A549 (cell line): ENCODE measurements at regions of chr1 and their contacts with region 1.

Region 1: DNA sequence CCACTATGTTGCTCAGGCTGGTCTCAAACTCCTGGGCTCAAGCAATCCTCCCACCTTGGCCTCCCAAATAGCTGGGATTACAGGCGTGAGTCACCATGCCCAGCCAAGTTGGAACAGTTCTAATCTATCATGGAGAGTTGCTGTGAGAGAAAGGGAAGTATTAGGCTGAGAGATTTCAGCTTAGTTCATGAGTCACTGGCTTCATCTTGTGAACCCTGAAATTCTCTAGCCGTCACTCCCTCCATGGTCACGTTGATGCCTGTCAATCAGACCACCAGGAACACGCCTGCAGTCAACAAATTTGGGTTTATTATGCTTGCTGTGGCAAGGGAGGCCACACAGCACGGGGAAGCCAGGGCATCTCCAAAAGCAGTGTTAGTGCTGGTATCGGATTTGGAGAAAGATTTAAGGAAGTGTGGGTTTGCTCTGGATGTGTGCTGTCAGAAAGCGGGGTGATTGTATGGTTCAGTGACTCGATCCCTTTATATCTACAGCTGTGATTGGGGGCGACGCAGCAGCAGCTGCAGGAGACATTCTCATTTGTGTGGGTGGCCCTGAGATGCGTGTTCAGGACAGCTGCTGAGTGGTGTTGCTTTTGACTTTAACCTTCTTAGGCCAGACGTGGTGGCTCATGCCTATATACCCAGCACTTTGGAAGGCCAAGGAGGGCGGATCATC is 18.7 kb downstream of the UQCRHL start:
- DNase-seq: no peak
- ATAC-seq: peak in 1 of 2 experiments; percentile 13; a peak in 3 of 6 replicates
- H3K4me3 ChIP-seq: no peak overlapping the region
- H3K27ac ChIP-seq: peak overlapping the region; percentile 84 to 90
- H3K4me1 ChIP-seq: peaks cover 52% of the 10 kb centered on the region
- CTCF ChIP-seq: no peak
- EP300 ChIP-seq: no peak
- POLR2A ChIP-seq: no peak
- RAD21 ChIP-seq: no peak

Region 2: DNA sequence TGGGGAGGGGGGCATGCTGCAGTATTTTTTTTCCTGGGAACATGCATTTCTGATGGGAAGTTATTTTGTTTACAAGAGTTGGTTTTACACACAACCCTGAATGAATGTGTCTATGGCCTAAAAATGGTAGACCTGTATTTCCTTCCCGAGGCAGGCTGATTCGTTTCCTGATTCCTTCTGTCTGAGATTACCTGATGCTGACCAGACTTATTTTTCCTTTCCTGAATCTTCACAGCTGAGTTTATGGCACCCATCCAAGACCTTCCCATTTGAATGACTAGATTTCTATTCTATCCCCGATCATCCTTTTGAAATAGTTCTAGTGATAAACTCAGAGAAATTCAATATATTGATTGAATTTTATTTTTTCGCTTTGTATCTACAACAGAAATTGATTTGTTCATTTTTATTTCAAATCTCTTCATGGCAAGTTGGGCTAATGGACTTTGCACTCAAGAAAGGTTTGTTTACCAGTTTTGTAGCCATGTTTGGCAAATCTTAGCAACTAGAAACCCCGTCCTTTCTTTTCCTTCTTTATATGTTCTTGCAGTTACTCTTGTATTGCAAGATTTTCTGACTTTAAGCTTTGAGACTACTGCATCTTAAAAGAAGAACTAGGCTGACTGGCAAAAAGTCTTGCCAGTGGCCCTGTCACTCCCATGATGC is 120.5 kb before region 1 on chr1:
- CTCF ChIA-PET with region 1: no interaction called
- POLR2A ChIA-PET with region 1: no interaction called
- DNase-seq: no peak
- ATAC-seq: no peak
- H3K4me3 ChIP-seq: no peak overlapping the region
- H3K27ac ChIP-seq: no peak overlapping the region
- H3K4me1 ChIP-seq: no peaks in the 10 kb centered on the region
- CTCF ChIP-seq: no peak
- EP300 ChIP-seq: no peak
- POLR2A ChIP-seq: no peak
- RAD21 ChIP-seq: no peak

Region 3: DNA sequence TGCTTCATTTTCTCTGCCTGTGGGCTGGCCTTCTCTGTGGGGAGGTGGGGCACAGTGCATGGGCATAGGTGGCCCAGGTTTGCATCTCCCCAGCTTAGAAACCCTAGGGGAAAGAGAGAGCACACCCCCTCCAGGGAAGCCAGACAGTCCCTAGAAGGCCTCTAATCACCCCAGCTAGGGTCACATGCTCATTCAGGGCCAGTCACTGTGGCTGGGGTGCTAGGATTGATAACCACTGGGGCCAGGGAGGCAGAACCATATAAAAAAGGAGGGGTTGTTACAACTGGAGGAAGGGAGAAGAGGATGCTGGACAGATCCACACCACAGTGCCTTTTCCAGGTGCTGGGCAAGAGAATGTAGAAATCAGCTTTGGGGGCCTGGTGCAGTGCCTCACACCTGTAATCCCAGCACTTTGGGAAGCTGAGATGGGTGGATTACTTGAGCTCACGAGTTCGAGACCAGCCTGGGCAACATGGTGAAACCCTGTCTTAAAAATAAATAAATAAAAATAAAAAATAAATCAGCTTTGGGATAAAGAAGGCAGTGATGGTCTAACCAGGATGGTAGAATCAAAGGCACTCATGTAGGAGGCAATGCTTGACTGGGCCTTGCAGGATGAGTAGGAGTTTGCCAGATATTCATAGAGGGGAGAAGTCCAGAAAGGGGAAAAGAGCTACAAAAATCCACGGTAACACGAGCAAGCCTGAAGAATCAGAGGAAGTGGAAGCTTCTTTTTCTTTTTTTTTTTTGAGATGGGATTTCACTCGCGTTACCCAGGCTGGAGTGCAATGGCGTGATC is 10.7 kb before region 1 on chr1:
- CTCF ChIA-PET with region 1: interaction called, 12 read pairs
- POLR2A ChIA-PET with region 1: no interaction called
- DNase-seq: no peak
- ATAC-seq: no peak
- H3K4me3 ChIP-seq: no peak overlapping the region
- H3K27ac ChIP-seq: peak overlapping the region; percentile 32 to 90; a peak in 4 of 6 replicates
- H3K4me1 ChIP-seq: peaks cover 35% of the 10 kb centered on the region
- CTCF ChIP-seq: no peak
- EP300 ChIP-seq: no peak
- POLR2A ChIP-seq: no peak
- RAD21 ChIP-seq: no peak

Region 4: DNA sequence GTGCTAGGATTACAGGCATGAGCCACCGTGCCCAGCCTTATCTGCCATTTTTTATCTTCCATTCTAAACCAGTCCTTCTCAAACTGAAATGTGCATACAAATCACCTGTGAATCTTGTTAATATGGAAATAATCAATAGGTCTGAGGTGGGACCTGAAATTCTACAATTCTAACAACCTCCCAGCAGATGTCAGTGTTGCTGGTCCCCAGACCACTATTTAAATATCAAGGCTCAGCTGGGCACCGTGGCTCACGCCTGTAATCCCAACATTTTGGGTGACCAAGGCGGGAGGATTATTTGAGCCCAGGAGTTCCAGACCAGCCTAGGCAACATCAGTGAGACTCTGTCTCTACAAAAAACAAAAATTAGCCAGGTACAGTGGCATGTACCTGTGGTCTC is 14.6 kb after region 1 on chr1:
- CTCF ChIA-PET with region 1: interaction called, 18 read pairs
- POLR2A ChIA-PET with region 1: interaction called, 8 read pairs
- DNase-seq: peak in 1 of 2 experiments; percentile 43
- ATAC-seq: no peak
- H3K4me3 ChIP-seq: no peak overlapping the region
- H3K27ac ChIP-seq: peak overlapping the region; percentile 92 to 99; a peak in 4 of 6 replicates
- H3K4me1 ChIP-seq: peaks cover 26% of the 10 kb centered on the region
- CTCF ChIP-seq: peak; percentile 28; the same call in 2 of the 3 replicates
- EP300 ChIP-seq: no peak
- POLR2A ChIP-seq: no peak
- RAD21 ChIP-seq: peak; percentile 21 to 46; a peak in 2 of 5 replicates

Region 5: DNA sequence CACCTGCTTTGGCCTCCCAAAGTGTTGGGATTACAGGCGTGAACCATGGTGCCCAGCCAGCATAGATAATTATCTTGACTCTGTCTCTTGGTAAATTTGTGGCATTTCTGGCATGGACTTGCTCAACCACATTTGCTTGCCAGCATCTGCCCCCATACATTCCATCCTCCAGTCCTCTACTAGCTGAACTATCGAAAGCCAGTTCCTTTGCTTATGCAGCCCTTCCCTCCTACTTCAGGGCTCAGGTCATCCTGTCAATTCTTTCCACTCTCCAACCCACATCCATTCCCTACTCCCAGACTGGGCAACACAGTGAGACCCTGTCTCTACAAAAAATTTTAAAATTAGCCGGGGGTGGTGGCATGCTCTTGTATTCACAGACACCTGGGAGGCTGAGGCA is 31.7 kb after region 1 on chr1:
- CTCF ChIA-PET with region 1: interaction called, 26 read pairs
- POLR2A ChIA-PET with region 1: no interaction called
- DNase-seq: no peak
- ATAC-seq: peak in 1 of 2 experiments; percentile 38; a peak in 1 of 6 replicates
- H3K4me3 ChIP-seq: no peak overlapping the region
- H3K27ac ChIP-seq: no peak overlapping the region
- H3K4me1 ChIP-seq: no peaks in the 10 kb centered on the region
- CTCF ChIP-seq: no peak
- EP300 ChIP-seq: no peak
- POLR2A ChIP-seq: no peak
- RAD21 ChIP-seq: no peak

Region 6: GRCh38 chr1:15835741-15836510 is 47.2 kb after region 1 on chr1:
- CTCF ChIA-PET with region 1: interaction called, 7 read pairs
- POLR2A ChIA-PET with region 1: interaction called, 98 read pairs
- DNase-seq: peak; percentile 74 to 98
- ATAC-seq: peak; percentile 67 to 75
- H3K4me3 ChIP-seq: peak overlapping the region; percentile 77
- H3K27ac ChIP-seq: peak overlapping the region; percentile 98 to 100
- H3K4me1 ChIP-seq: peaks cover 20% of the 10 kb centered on the region
- CTCF ChIP-seq: no peak
- EP300 ChIP-seq: no peak
- POLR2A ChIP-seq: peak; percentile 69
- RAD21 ChIP-seq: no peak

Region 7: GRCh38 chr1:15876357-15877055 is 87.7 kb after region 1 on chr1:
- CTCF ChIA-PET with region 1: interaction called, 20 read pairs
- POLR2A ChIA-PET with region 1: no interaction called
- DNase-seq: peak; percentile 45 to 75
- ATAC-seq: peak; percentile 98 to 99
- H3K4me3 ChIP-seq: no peak overlapping the region
- H3K27ac ChIP-seq: no peak overlapping the region
- H3K4me1 ChIP-seq: peaks cover 22% of the 10 kb centered on the region; the same call in 2 of the 3 replicates
- CTCF ChIP-seq: peak; percentile 19; the same call in 1 of the 3 replicates
- EP300 ChIP-seq: no peak
- POLR2A ChIP-seq: no peak
- RAD21 ChIP-seq: peak; percentile 21 to 29; a peak in 2 of 5 replicates

Region 8: DNA sequence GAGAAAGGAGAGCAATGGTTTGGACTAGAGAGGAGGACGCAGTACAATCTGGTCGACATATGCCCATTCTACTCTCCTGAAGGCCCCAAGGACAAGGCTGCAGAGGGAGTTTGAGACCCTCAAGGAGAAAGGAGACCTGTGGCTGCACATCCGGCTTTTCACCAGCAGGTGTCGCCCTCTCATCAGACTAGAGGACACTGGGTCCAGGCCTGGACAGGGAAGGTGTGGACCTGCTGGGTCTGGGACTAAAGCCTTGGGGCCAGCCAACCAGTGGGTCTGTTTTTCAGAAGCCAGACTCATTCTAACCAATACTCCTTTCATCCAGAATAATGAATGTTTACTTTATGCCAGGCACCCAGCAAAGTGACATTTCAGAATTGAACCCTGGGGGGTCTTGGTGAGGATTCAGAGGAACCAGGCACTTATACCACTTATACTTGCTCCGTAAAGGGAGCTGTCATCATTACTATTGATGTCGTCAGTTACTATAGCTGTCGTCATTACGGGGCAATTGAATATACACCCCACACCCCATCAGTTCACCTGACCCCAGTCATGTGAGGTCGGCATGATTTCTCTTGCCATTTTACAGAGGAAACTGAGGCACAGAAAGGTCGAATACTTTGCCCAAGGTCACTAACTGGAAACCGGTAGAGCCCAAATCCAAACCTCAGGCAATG is 220.4 kb after region 1 on chr1:
- CTCF ChIA-PET with region 1: interaction called, 11 read pairs
- POLR2A ChIA-PET with region 1: interaction called, 3 read pairs
- DNase-seq: peak; percentile 49 to 74
- ATAC-seq: peak; percentile 72 to 83
- H3K4me3 ChIP-seq: no peak overlapping the region
- H3K27ac ChIP-seq: no peak overlapping the region; a peak in 1 of 6 replicates
- H3K4me1 ChIP-seq: peaks cover 32% of the 10 kb centered on the region
- CTCF ChIP-seq: peak; percentile 84
- EP300 ChIP-seq: no peak
- POLR2A ChIP-seq: no peak
- RAD21 ChIP-seq: peak; percentile 88 to 91